ENCODE measurements at regions of chr12 and their contacts with region 1.

Region 1: GRCh38 chr12:48890657-48891418 is 25.2 kb upstream of the RND1 start:
- DNase-seq: no peak
- H3K4me3 ChIP-seq: peak overlapping the region in 3 of 4 donors; percentile 14 to 46 (median 32)
- H3K27ac ChIP-seq: no peak overlapping the region
- H3K4me1 ChIP-seq: peaks cover 8 to 11% (median 9%) of the 10 kb centered on the region in 3 donors
- H3K27me3 ChIP-seq: peaks cover 0 to 26% (median 0%) of the 10 kb centered on the region in 4 donors
- CTCF ChIP-seq: peak; percentile 71 to 95 (median 90)
- POLR2A ChIP-seq: no peak

Region 2: DNA sequence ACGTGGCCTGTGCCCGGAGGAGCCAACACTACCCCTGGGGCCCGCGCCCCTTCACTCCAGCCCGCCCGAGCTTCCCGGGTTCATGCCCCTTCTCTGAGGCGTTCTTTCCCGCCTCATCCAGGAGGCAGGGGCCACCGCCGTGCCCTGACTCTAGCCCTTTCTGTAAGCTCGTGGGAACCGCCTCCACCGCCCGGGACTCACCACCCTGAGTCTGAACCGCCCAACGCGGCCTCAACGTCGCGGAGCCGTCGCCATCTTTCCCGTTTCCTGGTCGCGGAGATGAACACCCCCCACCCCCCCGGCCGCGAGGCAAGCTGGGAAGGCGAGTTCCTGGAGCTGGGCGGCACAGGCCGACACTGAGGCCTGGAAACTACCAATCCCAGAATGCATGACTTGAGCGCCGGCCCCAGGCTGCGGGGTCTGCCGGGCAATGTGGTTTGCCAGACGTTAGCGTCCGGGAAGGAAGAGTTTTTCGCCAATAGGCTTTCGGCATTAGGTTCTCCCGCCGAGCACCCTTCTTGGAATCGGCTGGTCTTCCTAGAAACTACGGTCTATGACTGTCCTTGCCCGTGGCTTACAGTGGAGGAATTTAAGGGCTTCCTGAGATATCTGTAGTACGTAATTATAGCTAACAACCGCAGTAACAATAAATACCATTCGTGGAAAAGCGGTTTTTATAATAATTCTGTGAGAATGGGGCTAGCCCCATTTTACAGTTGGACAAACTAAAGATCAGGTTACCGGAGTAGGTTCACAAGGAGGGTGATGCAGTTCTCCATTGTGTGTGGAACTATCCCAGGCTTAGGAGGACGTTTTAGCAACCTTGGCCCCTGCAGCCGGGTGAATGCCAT is 38.7 kb before region 1 on chr12 and contains the start of gene DDX23:
- intact Hi-C with region 1: loop called (anchors 2 kb)
- DNase-seq: peak; percentile 80
- H3K4me3 ChIP-seq: peak within 1 kb of the TSS; percentile 74 to 99 (median 95)
- H3K27ac ChIP-seq: peak within 1 kb of the TSS; percentile 89 to 92 (median 90)
- H3K4me1 ChIP-seq: peaks cover 10 to 53% (median 17%) of the 10 kb centered on the region in 3 donors
- H3K27me3 ChIP-seq: no peaks in the 10 kb centered on the region
- CTCF ChIP-seq: peak in 1 of 6 experiments; percentile 44
- POLR2A ChIP-seq: peak in 2 of 4 donors; percentile 8 to 40
- total RNA-seq, gene DDX23: 46.0 to 71.5 (median 56.7) TPM